Transverse colon (tissue), 4 donors: ENCODE measurements at regions of chr10 and their contacts with region 1.

Region 1: DNA sequence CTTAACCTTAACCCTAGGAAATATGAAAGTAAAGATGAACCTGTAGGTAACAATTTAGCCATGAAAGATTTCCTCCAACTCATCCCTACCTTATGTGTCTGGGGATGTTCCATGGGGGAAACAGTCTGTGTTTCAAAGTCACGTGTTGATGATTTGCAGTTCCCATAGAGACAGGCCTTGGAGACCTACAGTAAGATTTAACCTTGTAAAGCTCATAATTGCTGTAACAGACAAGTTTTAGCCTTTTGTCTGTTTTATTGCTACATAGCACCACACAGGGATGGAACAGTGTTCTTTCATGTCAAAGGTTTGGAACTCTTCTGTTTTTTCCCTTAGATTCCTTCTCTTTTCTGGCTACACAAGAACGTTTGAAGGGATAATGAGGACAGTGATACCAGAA is 35.2 kb upstream of the ITGA8 start:
- DNase-seq: no peak
- H3K4me3 ChIP-seq: no peak overlapping the region
- H3K27ac ChIP-seq: no peak overlapping the region
- H3K4me1 ChIP-seq: no peaks in the 10 kb centered on the region
- H3K27me3 ChIP-seq: peaks cover 3% of the 10 kb centered on the region
- CTCF ChIP-seq: no peak
- EP300 ChIP-seq: no peak
- POLR2A ChIP-seq: no peak

Region 2: GRCh38 chr10:14873090-14873760 is 881.7 kb before region 1 on chr10:
- in situ Hi-C with region 1: no loop called
- intact Hi-C with region 1: loop called (anchors 5 kb)
- DNase-seq: no peak
- H3K4me3 ChIP-seq: no peak overlapping the region
- H3K27ac ChIP-seq: no peak overlapping the region
- H3K4me1 ChIP-seq: peaks cover 0 to 11% (median 6%) of the 10 kb centered on the region in 4 donors
- H3K27me3 ChIP-seq: no peaks in the 10 kb centered on the region
- CTCF ChIP-seq: no peak
- EP300 ChIP-seq: no peak
- POLR2A ChIP-seq: no peak